Heart right ventricle (tissue), 16 donors: ENCODE measurements at regions of chr1 and their contacts with region 1.

Region 1: GRCh38 chr1:66533804-66534740 is at the start of gene SGIP1:
- DNase-seq: peak; percentile 55 to 80
- ATAC-seq: peak; percentile 87 to 96 (median 92)
- H3K4me3 ChIP-seq: peak within 1 kb of the TSS; percentile 7 to 62 (median 52)
- H3K27ac ChIP-seq: peak within 1 kb of the TSS; percentile 33 to 92 (median 76)
- H3K4me1 ChIP-seq: peaks cover 0 to 54% (median 11%) of the 10 kb centered on the region in 9 donors
- H3K27me3 ChIP-seq: peaks cover 0 to 24% (median 0%) of the 10 kb centered on the region in 7 donors
- CTCF ChIP-seq: no peak
- total RNA-seq, gene SGIP1: 1.6 to 19.6 (median 4.9) TPM

Region 2: GRCh38 chr1:66676613-66677298 is 142.7 kb after region 1 on chr1:
- intact Hi-C with region 1: loop called in 1 of 10 experiments (anchors 10 kb)
- DNase-seq: peak in 1 of 2 donors; percentile 27
- ATAC-seq: peak in 7 of 8 donors; percentile 63 to 87 (median 80)
- H3K4me3 ChIP-seq: no peak overlapping the region
- H3K27ac ChIP-seq: peak overlapping the region in 9 of 10 donors; percentile 25 to 87 (median 76)
- H3K4me1 ChIP-seq: peaks cover 0 to 51% (median 9%) of the 10 kb centered on the region in 9 donors
- H3K27me3 ChIP-seq: no peaks in the 10 kb centered on the region
- CTCF ChIP-seq: no peak